ENCODE measurements at regions of chr3 and their contacts with region 1.

Region 1: GRCh38 chr3:81643721-81644120 is 117.7 kb downstream of the GBE1 start:
- DNase-seq: no peak
- H3K4me3 ChIP-seq: no peak overlapping the region
- H3K27ac ChIP-seq: no peak overlapping the region
- H3K4me1 ChIP-seq: no peaks in the 10 kb centered on the region
- H3K27me3 ChIP-seq: no peaks in the 10 kb centered on the region
- CTCF ChIP-seq: peak in 1 of 3 experiments; percentile 22
- EP300 ChIP-seq: no peak
- POLR2A ChIP-seq: no peak

Region 2: DNA sequence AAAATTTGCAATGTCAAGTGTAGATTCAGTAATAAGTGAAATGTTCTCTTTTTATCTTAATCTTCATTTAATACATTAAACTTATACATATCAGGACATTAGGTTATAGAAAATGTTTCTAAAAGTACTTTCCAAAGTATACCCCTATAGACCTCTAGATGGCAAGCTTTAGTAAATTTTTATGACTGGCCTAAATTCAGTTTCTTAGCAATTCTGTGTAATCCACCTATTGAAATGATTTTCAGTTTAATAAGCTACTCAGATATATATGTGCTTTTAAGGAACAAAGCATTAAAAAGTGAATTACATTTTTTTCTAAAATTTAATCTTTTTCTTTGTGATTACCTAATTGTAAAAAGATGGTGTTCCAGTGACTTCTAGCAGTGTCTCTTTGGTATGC is 224.5 kb before region 1 on chr3:
- intact Hi-C with region 1: loop called (anchors 5 kb)
- DNase-seq: no peak
- H3K4me3 ChIP-seq: no peak overlapping the region
- H3K27ac ChIP-seq: no peak overlapping the region
- H3K4me1 ChIP-seq: no peaks in the 10 kb centered on the region
- H3K27me3 ChIP-seq: no peaks in the 10 kb centered on the region
- CTCF ChIP-seq: peak; percentile 44 to 59 (median 49)
- EP300 ChIP-seq: no peak
- POLR2A ChIP-seq: no peak